ENCODE measurements at regions of chr3 and their contacts with region 1.

Region 1: DNA sequence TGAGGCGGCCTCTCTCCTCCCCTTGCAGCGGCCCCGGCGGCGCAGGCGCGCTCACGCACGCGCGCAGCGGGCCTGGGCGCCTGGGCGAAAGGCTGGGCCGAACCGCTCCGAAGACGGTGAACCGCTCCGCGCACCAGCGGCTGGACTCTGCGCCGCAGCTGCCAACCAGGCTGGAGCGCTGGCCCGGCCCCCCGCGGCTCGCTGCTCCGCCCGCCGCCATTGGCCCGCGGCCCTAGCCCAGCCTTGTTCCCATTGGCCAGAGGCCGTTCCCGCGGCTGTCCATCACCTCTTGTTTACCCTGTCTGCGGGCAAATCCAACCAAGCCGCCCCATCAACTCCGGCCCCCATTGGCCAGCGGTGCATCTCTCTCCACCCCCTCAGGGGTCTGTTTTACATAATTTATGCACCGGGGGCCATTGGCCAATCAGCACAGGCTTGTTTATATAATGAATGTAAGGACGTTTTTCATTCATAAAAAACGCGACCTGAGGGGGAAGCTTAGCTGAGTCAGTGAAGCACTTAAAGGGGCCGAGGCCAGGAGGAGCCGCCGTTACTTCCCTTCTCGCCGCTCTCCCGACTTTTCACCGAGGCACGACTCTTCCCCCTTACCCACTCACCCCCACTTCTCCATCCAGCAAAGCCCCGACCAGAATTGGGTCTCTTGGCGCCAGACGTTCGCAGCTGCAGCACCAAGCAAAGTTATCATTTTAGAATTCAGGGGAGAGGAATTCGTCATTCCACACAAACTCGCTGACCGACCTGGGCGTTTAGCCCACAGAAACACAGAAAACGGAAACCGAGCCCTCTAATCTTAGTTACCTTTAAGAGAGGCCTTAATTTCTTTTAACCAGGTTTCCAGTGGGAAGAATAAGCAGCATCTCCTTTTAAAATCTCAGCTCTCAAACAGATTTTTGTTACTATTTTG is at the start of gene ETV5:
- DNase-seq: peak; percentile 91
- H3K4me3 Mint-ChIP-seq: peak within 1 kb of the TSS; percentile 90
- H3K27ac Mint-ChIP-seq: peak within 1 kb of the TSS; percentile 87
- H3K4me1 Mint-ChIP-seq: peaks cover 42% of the 10 kb centered on the region
- H3K27me3 Mint-ChIP-seq: peaks cover 74% of the 10 kb centered on the region
- total RNA-seq, gene ETV5: 3.3 and 3.6 TPM in 2 replicates

Region 2: GRCh38 chr3:185781759-185782158 is 327.4 kb before region 1 on chr3:
- intact Hi-C with region 1: no loop called
- DNase-seq: no peak
- H3K4me3 Mint-ChIP-seq: no peak overlapping the region
- H3K27ac Mint-ChIP-seq: no peak overlapping the region
- H3K4me1 Mint-ChIP-seq: no peaks in the 10 kb centered on the region
- H3K27me3 Mint-ChIP-seq: peaks cover 4% of the 10 kb centered on the region

Region 3: GRCh38 chr3:185824476-185825378 is 284.5 kb before region 1 on chr3 and contains the start of gene IGF2BP2:
- intact Hi-C with region 1: loop called (anchors 5 kb)
- DNase-seq: peak; percentile 35
- H3K4me3 Mint-ChIP-seq: peak within 1 kb of the TSS; percentile 83
- H3K27ac Mint-ChIP-seq: no peak within 1 kb of the TSS
- H3K4me1 Mint-ChIP-seq: peaks cover 18% of the 10 kb centered on the region
- H3K27me3 Mint-ChIP-seq: peaks cover 74% of the 10 kb centered on the region
- total RNA-seq, gene IGF2BP2: 0.42 and 0.62 TPM in 2 replicates

Region 4: GRCh38 chr3:186060222-186060621 is 49.0 kb before region 1 on chr3:
- intact Hi-C with region 1: loop called (anchors 1 kb)
- DNase-seq: peak; percentile 3
- H3K4me3 Mint-ChIP-seq: no peak overlapping the region
- H3K27ac Mint-ChIP-seq: no peak overlapping the region
- H3K4me1 Mint-ChIP-seq: peaks cover 13% of the 10 kb centered on the region
- H3K27me3 Mint-ChIP-seq: peaks cover 57% of the 10 kb centered on the region

Region 5: GRCh38 chr3:186193534-186194450 is 84.6 kb after region 1 on chr3:
- intact Hi-C with region 1: loop called (anchors 5 kb)
- DNase-seq: no peak
- H3K4me3 Mint-ChIP-seq: no peak overlapping the region
- H3K27ac Mint-ChIP-seq: no peak overlapping the region
- H3K4me1 Mint-ChIP-seq: no peaks in the 10 kb centered on the region
- H3K27me3 Mint-ChIP-seq: peaks cover 36% of the 10 kb centered on the region

Region 6: GRCh38 chr3:186361762-186362536 is 252.7 kb after region 1 on chr3 and contains the start of gene DGKG:
- intact Hi-C with region 1: loop called (anchors 5 kb)
- DNase-seq: no peak
- H3K4me3 Mint-ChIP-seq: peak within 1 kb of the TSS; percentile 32
- H3K27ac Mint-ChIP-seq: no peak within 1 kb of the TSS
- H3K4me1 Mint-ChIP-seq: no peaks in the 10 kb centered on the region
- H3K27me3 Mint-ChIP-seq: peaks cover 44% of the 10 kb centered on the region
- total RNA-seq, gene DGKG: 0.26 and 1.4 TPM in 2 replicates

Region 7: DNA sequence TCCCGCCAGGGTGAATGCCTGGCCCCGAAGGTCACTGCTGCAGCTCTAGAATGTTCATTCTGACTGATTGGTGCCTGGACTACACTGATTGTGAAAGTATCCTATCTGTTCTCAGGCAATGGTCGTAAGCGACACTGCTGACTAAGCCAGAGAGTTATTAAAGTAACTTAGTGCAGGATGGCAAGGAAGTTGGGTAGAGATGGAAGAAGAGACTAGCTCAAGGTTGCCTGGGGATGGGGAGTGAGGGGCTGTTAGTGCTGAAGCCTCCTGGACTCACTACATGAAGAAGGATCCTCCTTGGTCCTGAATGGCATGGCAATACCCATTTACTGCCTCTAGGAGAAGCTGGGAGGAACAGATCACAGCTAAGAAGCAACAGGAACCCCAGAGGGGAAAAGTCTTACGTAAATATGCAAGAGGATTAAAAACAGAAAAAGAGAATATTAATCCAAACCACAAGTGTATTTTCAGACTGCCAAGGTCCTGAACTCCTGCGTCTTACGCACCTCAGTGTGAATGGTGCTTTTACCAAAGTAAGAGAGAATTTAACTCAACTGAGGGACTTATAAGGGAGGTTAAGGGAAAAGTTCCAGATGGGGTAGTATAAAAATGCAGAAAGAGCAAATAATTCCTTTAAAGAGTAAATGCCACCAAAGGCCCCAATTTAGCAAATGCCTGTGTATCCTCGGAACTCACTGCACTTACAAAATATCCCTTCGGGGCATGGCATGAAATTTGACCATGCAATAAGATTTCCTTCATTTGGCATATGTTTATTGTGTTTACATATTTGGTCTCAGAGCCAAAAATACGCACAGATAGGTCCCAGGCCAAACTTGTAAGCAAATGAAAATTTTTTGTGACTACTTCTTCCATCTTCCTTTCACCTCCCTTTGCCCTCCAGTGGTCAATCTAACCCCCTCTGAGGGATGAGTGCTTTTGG is 316.9 kb after region 1 on chr3:
- intact Hi-C with region 1: no loop called
- DNase-seq: no peak
- H3K4me3 Mint-ChIP-seq: no peak overlapping the region
- H3K27ac Mint-ChIP-seq: no peak overlapping the region
- H3K4me1 Mint-ChIP-seq: no peaks in the 10 kb centered on the region
- H3K27me3 Mint-ChIP-seq: peaks cover 9% of the 10 kb centered on the region

Region 8: GRCh38 chr3:186617038-186617946 is 508.1 kb after region 1 on chr3:
- intact Hi-C with region 1: loop called (anchors 5 kb)
- DNase-seq: peak; percentile 79
- H3K4me3 Mint-ChIP-seq: peak overlapping the region; percentile 68
- H3K27ac Mint-ChIP-seq: peak overlapping the region; percentile 6
- H3K4me1 Mint-ChIP-seq: peaks cover 28% of the 10 kb centered on the region
- H3K27me3 Mint-ChIP-seq: peaks cover 48% of the 10 kb centered on the region

Region 9: GRCh38 chr3:186882881-186883685 is 773.9 kb after region 1 on chr3:
- intact Hi-C with region 1: no loop called
- DNase-seq: peak; percentile 31
- H3K4me3 Mint-ChIP-seq: peak overlapping the region; percentile 54
- H3K27ac Mint-ChIP-seq: peak overlapping the region; percentile 90
- H3K4me1 Mint-ChIP-seq: peaks cover 58% of the 10 kb centered on the region
- H3K27me3 Mint-ChIP-seq: no peaks in the 10 kb centered on the region

Measured in activated T-helper 1 cell treated with anti-CD3 and anti-CD28 coated beads, Interleukin-12 subunit alpha, Interleukin-12 subunit beta, Interleukin-2, Interleukin-4 antibody, amounts not matched to agents 30 ng/mL and 10 ng/mL and 1 ng/mL, durations not matched to agents 14 hours and 24 hours and 36 hours (primary cell).